K562 (cell line): ENCODE measurements at regions of chrX and their contacts with region 1.

Region 1: GRCh38 chrX:18390941-18391538 is 34.4 kb upstream of the CDKL5 start:
- DNase-seq: peak; percentile 28 to 59 (median 38)
- ATAC-seq: peak; percentile 61; the same call in 2 of the 3 replicates
- H3K4me3 ChIP-seq: no peak overlapping the region
- H3K27ac ChIP-seq: no peak overlapping the region
- H3K4me1 ChIP-seq: no peaks in the 10 kb centered on the region
- H3K27me3 ChIP-seq: peaks cover 3 to 18% of the 10 kb centered on the region in 2 experiments; a peak in 3 of 5 replicates
- CTCF ChIP-seq: peak; percentile 44 to 73 (median 56); a peak in 4 of 6 replicates
- EP300 ChIP-seq: no peak
- POLR2A ChIP-seq: no peak
- RAD21 ChIP-seq: peak; percentile 66 to 71

Region 2: GRCh38 chrX:17967888-17968287 is 423.2 kb before region 1 on chrX:
- CTCF ChIA-PET with region 1: no interaction called
- POLR2A ChIA-PET with region 1: no interaction called
- in situ Hi-C with region 1: loop called (anchors 25 kb)
- intact Hi-C with region 1: no loop called
- DNase-seq: no peak
- ATAC-seq: no peak
- H3K4me3 ChIP-seq: no peak overlapping the region
- H3K27ac ChIP-seq: no peak overlapping the region
- H3K4me1 ChIP-seq: no peaks in the 10 kb centered on the region
- H3K27me3 ChIP-seq: no peaks in the 10 kb centered on the region
- CTCF ChIP-seq: no peak
- EP300 ChIP-seq: no peak
- POLR2A ChIP-seq: no peak
- RAD21 ChIP-seq: no peak

Region 3: GRCh38 chrX:17987783-17988182 is 403.3 kb before region 1 on chrX:
- CTCF ChIA-PET with region 1: no interaction called
- POLR2A ChIA-PET with region 1: no interaction called
- in situ Hi-C with region 1: no loop called
- intact Hi-C with region 1: no loop called
- DNase-seq: no peak
- ATAC-seq: no peak
- H3K4me3 ChIP-seq: no peak overlapping the region
- H3K27ac ChIP-seq: no peak overlapping the region
- H3K4me1 ChIP-seq: no peaks in the 10 kb centered on the region
- H3K27me3 ChIP-seq: peaks cover 0 to 5% of the 10 kb centered on the region in 2 experiments; a peak in 1 of 5 replicates
- CTCF ChIP-seq: no peak
- EP300 ChIP-seq: no peak
- POLR2A ChIP-seq: no peak
- RAD21 ChIP-seq: no peak

Region 4: DNA sequence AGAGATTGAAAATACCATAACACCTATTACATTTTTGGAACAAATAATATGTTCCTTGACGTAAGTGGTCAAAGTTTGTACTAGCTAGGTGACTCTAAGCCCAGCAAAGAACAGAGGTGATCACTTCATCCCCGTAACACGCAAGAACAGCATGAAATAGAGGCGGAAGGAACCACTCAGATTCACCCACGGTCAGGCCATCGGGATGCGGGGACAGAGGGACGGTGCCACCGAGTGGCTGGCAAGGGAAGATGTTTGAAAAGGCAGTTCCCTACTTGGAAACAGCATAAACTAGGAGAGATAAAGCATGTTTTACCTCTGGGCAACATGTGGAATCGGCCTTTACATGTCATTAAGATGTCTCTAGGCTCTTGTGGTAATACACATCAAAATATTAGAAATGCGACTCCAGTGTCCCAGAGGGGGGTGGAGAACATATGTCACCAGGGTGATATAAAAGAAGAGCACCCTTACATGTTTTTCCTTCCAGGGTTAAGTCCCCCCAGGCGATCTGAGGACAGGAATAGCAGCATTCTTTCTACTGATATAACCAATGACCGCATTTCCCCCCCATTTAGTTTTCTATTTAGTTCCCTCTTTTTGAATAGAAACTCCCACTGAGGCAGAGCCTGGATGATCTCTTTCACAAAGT is 508.9 kb after region 1 on chrX:
- CTCF ChIA-PET with region 1: no interaction called
- POLR2A ChIA-PET with region 1: no interaction called
- in situ Hi-C with region 1: no loop called
- intact Hi-C with region 1: loop called (anchors 10 kb)
- DNase-seq: peak in 1 of 4 experiments; percentile 8
- ATAC-seq: no peak
- H3K4me3 ChIP-seq: no peak overlapping the region
- H3K27ac ChIP-seq: no peak overlapping the region
- H3K4me1 ChIP-seq: no peaks in the 10 kb centered on the region
- H3K27me3 ChIP-seq: no peaks in the 10 kb centered on the region
- CTCF ChIP-seq: peak in 2 of 3 experiments; percentile 3 to 18; a peak in 2 of 6 replicates
- EP300 ChIP-seq: no peak
- POLR2A ChIP-seq: no peak
- RAD21 ChIP-seq: peak in 1 of 2 experiments; percentile 14; a peak in 1 of 4 replicates

Region 5: DNA sequence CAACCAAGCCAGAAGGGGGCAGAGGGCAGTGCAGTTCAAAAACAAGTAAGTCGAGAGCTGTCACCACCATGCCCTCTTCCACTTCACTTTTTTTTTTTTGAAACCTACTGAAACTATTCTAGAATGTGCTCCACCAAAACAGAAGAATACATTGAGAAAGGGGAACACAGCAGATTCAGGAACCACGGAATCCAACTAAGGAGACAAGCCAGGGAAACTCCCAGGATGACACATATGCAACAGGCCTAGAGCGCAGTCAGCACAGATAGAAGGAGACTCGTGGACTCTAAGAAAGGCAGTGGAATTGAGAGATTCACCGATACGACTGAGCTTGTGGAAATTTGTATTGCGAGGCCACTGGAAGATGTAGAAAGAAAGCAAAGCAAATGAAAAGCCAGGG is 526.8 kb after region 1 on chrX:
- CTCF ChIA-PET with region 1: interaction called, 3 read pairs
- POLR2A ChIA-PET with region 1: no interaction called
- in situ Hi-C with region 1: loop called (anchors 10 kb)
- intact Hi-C with region 1: no loop called
- DNase-seq: no peak
- ATAC-seq: no peak
- H3K4me3 ChIP-seq: no peak overlapping the region
- H3K27ac ChIP-seq: no peak overlapping the region
- H3K4me1 ChIP-seq: no peaks in the 10 kb centered on the region
- H3K27me3 ChIP-seq: no peaks in the 10 kb centered on the region
- CTCF ChIP-seq: no peak
- EP300 ChIP-seq: no peak
- POLR2A ChIP-seq: no peak
- RAD21 ChIP-seq: no peak

Region 6: GRCh38 chrX:18984381-18985185 is 593.5 kb after region 1 on chrX:
- CTCF ChIA-PET with region 1: no interaction called
- POLR2A ChIA-PET with region 1: no interaction called
- in situ Hi-C with region 1: no loop called
- intact Hi-C with region 1: no loop called
- DNase-seq: peak; percentile 88 to 92 (median 88)
- ATAC-seq: peak; percentile 93
- H3K4me3 ChIP-seq: peak overlapping the region; percentile 85
- H3K27ac ChIP-seq: peak overlapping the region; percentile 92
- H3K4me1 ChIP-seq: peaks cover 0 to 3% of the 10 kb centered on the region in 2 experiments; a peak in 3 of 5 replicates
- H3K27me3 ChIP-seq: no peaks in the 10 kb centered on the region
- CTCF ChIP-seq: peak in 1 of 3 experiments; percentile 8; a peak in 1 of 6 replicates
- EP300 ChIP-seq: no peak
- POLR2A ChIP-seq: peak; percentile 69
- RAD21 ChIP-seq: no peak

Region 7: GRCh38 chrX:19017271-19017670 is 626.2 kb after region 1 on chrX:
- CTCF ChIA-PET with region 1: no interaction called
- POLR2A ChIA-PET with region 1: no interaction called
- in situ Hi-C with region 1: no loop called
- intact Hi-C with region 1: loop called (anchors 10 kb)
- DNase-seq: peak; percentile 30 to 49 (median 42)
- ATAC-seq: peak; percentile 75
- H3K4me3 ChIP-seq: no peak overlapping the region
- H3K27ac ChIP-seq: no peak overlapping the region
- H3K4me1 ChIP-seq: no peaks in the 10 kb centered on the region
- H3K27me3 ChIP-seq: peaks cover 0 to 14% of the 10 kb centered on the region in 2 experiments; a peak in 4 of 5 replicates
- CTCF ChIP-seq: peak; percentile 56 to 71 (median 67)
- EP300 ChIP-seq: no peak
- POLR2A ChIP-seq: no peak
- RAD21 ChIP-seq: peak in 1 of 2 experiments; percentile 62; a peak in 2 of 4 replicates